ENCODE measurements at regions of chr6 and their contacts with region 1.

Region 1: GRCh38 chr6:126302191-126302590 is 37.7 kb upstream of the CENPW start:
- DNase-seq: peak; percentile 41
- ATAC-seq: peak; percentile 81
- H3K4me3 ChIP-seq: no peak overlapping the region
- H3K27ac ChIP-seq: peak overlapping the region; percentile 62
- H3K4me1 ChIP-seq: peaks cover 10% of the 10 kb centered on the region
- H3K27me3 ChIP-seq: no peaks in the 10 kb centered on the region
- CTCF ChIP-seq: no peak

Region 2: DNA sequence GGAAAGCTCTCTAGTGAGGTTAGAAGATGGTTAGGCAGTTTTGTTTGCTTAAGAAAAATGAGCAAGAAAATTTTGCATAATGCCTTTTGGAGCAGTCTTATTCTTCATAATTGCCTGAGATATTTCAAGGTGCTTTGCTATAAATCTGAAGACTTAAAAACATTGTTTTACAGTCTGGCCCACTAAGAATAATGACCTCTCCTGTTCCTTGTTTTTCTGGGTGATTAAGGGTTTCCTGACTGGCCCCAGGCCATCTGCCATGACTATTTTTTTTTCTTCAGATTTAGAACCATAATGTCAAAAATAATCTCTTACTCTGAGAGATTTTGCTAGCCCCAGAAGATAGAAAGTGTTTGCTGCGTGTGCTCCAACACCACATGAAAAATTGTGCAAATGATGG is 34.6 kb before region 1 on chr6:
- CTCF ChIA-PET with region 1: no interaction called
- POLR2A ChIA-PET with region 1: no interaction called
- intact Hi-C with region 1: loop called (anchors 2 kb)
- DNase-seq: no peak
- ATAC-seq: no peak
- H3K4me3 ChIP-seq: no peak overlapping the region
- H3K27ac ChIP-seq: no peak overlapping the region
- H3K4me1 ChIP-seq: no peaks in the 10 kb centered on the region
- H3K27me3 ChIP-seq: no peaks in the 10 kb centered on the region
- CTCF ChIP-seq: no peak